Activated CD4-positive, alpha-beta memory T cell treated with anti-CD3 and anti-CD28 coated beads for 36 hours (primary cell): ENCODE measurements at regions of chr1 and their contacts with region 1.

Region 1: DNA sequence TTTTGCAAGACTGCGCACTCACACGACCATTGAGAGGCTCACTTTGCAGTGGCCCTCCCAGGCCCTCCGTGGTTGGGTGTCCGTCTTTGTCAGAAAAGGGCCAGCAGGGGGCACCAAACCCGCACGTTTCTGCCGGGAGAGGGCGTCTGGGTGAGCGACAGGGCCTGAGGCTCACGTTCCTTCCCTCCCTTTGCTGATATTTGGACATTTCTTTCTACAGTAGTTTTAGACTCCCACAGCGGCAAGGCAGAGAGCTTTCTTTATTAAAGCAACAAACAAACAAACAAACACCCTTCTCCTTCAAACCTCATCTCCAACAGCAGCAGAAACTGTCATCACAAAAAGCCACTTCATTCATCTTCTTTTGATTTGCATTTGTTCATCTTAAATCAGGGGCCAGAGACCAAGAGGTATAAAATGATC is 79.2 kb upstream of the WDR26 start:
- DNase-seq: peak; percentile 91
- H3K4me3 Mint-ChIP-seq: no peak overlapping the region
- H3K27ac Mint-ChIP-seq: no peak overlapping the region
- H3K4me1 Mint-ChIP-seq: peaks cover 3% of the 10 kb centered on the region
- H3K27me3 Mint-ChIP-seq: no peaks in the 10 kb centered on the region

Region 2: GRCh38 chr1:224211206-224211962 is 302.4 kb before region 1 on chr1:
- CTCF ChIA-PET with region 1: no interaction called
- POLR2A ChIA-PET with region 1: no interaction called
- intact Hi-C with region 1: no loop called
- DNase-seq: no peak
- H3K4me3 Mint-ChIP-seq: no peak overlapping the region
- H3K27ac Mint-ChIP-seq: no peak overlapping the region
- H3K4me1 Mint-ChIP-seq: no peaks in the 10 kb centered on the region
- H3K27me3 Mint-ChIP-seq: no peaks in the 10 kb centered on the region

Region 3: DNA sequence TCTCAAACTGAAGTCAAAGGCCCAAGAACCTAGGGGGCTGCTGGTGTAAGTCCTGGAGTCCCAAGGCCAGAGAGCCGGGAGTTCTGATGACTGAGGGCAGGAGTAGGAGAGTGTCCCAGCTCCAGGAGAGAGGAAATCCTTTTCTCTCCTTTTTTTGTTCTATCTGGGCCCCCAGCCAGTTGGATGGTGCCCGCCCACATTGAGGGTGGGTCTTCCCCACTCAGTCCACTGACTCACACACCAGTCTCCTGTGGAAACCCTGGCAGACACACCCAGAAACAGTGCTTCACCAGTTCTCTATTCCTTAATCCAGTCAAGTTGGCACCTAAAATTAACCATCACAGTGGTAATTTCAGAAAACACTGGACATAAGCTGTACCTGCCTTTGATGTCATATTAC is 66.5 kb before region 1 on chr1:
- CTCF ChIA-PET with region 1: no interaction called
- POLR2A ChIA-PET with region 1: no interaction called
- intact Hi-C with region 1: no loop called
- DNase-seq: no peak
- H3K4me3 Mint-ChIP-seq: no peak overlapping the region
- H3K27ac Mint-ChIP-seq: no peak overlapping the region
- H3K4me1 Mint-ChIP-seq: peaks cover 7% of the 10 kb centered on the region
- H3K27me3 Mint-ChIP-seq: no peaks in the 10 kb centered on the region

Region 4: GRCh38 chr1:224497714-224498573 is 15.9 kb before region 1 on chr1:
- CTCF ChIA-PET with region 1: interaction called, 30 read pairs
- POLR2A ChIA-PET with region 1: no interaction called
- intact Hi-C with region 1: no loop called
- DNase-seq: peak; percentile 87
- H3K4me3 Mint-ChIP-seq: peak overlapping the region; percentile 66
- H3K27ac Mint-ChIP-seq: peak overlapping the region; percentile 87
- H3K4me1 Mint-ChIP-seq: peaks cover 33% of the 10 kb centered on the region
- H3K27me3 Mint-ChIP-seq: no peaks in the 10 kb centered on the region

Region 5: DNA sequence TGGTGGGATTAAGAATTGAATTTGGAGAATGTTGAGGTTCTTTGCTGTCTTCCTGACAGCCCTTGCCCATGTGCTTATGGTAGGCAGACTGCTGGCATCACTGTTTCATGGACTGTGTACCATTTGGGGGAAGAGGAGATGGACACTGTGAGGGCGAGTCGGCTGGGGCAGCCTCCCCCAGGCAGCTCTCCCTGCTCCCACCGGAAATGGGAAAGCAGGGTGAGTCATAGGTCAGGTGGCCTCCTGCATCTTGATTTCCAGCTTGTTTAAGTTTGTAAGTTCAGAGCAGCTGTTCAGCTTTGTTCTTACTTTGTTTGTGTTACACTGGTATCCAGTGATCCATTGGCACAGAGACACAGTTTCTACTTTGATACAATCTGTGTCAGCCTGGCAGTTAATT is 15.1 kb after region 1 on chr1:
- CTCF ChIA-PET with region 1: interaction called, 11 read pairs
- POLR2A ChIA-PET with region 1: interaction called, 3 read pairs
- intact Hi-C with region 1: no loop called
- DNase-seq: no peak
- H3K4me3 Mint-ChIP-seq: no peak overlapping the region
- H3K27ac Mint-ChIP-seq: no peak overlapping the region
- H3K4me1 Mint-ChIP-seq: no peaks in the 10 kb centered on the region
- H3K27me3 Mint-ChIP-seq: no peaks in the 10 kb centered on the region

Region 6: DNA sequence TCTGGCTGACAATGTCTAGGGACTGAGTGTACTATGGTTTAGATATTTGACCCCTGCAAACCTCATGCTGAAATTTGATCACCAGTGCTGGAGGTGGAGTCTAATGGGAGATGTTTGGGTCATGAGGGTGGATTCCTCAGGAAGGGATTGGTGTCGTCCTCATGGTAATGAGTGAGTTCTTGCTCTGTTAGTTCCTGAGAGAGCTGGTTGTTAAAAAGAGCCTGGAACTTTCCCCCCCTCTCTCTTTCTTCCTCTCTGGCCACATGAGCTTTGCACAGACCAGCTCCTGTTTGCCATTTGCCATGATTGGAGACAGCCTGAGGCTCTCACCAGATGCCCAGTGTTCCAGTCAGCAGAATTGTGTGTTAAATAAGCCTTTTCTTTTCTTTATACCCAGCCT is 65.7 kb after region 1 on chr1:
- CTCF ChIA-PET with region 1: no interaction called
- POLR2A ChIA-PET with region 1: no interaction called
- intact Hi-C with region 1: no loop called
- DNase-seq: no peak
- H3K4me3 Mint-ChIP-seq: no peak overlapping the region
- H3K27ac Mint-ChIP-seq: no peak overlapping the region
- H3K4me1 Mint-ChIP-seq: no peaks in the 10 kb centered on the region
- H3K27me3 Mint-ChIP-seq: peaks cover 5% of the 10 kb centered on the region

Region 7: DNA sequence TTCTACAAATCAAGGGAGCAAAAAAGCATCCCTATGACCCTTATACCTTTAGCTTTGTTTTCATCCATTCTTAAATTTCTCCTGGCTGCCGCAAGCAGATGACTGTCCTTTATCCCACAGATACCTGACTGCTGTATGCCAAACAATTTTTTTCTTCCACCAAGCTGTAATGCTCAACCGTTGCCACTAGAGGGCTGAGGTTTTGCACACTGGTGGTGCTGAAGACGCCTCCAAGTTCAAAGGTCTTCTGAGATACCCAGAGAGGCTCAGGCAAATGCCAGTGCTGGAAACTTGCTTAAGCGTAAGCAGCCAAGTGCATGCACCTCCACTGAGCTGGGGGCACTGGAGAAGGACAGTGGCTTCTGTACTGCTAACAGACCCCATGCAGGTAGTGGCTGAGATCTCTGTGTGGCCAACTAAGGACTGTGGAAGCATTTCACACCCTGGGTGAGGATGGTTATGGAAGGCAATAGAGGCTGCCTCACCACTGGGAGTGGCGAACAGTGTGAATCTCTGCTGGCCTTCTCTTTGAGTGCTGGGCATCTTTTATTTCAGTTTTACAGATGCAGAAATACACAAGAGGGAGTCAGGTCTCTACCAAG is 130.9 kb after region 1 on chr1:
- CTCF ChIA-PET with region 1: interaction called, 6 read pairs
- POLR2A ChIA-PET with region 1: no interaction called
- intact Hi-C with region 1: loop called (anchors 2 kb)
- DNase-seq: peak; percentile 66
- H3K4me3 Mint-ChIP-seq: no peak overlapping the region
- H3K27ac Mint-ChIP-seq: no peak overlapping the region
- H3K4me1 Mint-ChIP-seq: no peaks in the 10 kb centered on the region
- H3K27me3 Mint-ChIP-seq: no peaks in the 10 kb centered on the region

Region 8: DNA sequence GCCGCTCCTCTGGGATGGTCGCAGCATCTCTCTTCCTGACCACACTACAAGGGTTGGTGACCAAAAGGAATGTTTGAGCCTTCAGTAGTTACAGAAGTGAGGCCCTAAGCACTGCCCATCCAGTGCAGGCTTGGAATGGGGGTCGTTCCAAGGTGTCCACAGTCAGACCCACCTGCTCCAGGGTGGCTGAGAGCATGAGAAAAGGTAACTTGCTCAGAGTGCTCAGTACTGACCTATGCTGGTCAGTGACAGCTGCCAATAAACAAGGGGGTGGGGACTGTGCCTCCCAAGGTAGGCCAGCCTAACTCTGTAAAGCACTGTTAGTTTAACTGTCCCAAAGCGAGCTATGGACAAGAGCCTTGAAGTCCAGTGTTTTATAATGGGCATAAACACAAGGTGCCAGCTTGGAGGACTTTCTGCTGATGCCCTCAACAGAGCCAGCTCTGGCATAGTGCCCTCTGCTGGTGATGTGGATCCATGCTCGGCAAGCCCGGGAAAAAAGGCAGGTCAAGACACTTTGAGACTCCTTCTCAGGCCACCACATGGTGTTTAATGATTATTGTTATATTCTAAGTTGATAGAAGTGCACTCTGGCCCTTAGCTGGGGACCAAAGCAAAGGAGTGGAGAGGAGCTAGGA is 337.5 kb after region 1 on chr1:
- CTCF ChIA-PET with region 1: interaction called, 134 read pairs
- POLR2A ChIA-PET with region 1: no interaction called
- intact Hi-C with region 1: loop called (anchors 1 kb)
- DNase-seq: peak; percentile 69
- H3K4me3 Mint-ChIP-seq: no peak overlapping the region
- H3K27ac Mint-ChIP-seq: no peak overlapping the region
- H3K4me1 Mint-ChIP-seq: no peaks in the 10 kb centered on the region
- H3K27me3 Mint-ChIP-seq: peaks cover 7% of the 10 kb centered on the region